ENCODE measurements at regions of chr1 and their contacts with region 1.

Region 1: GRCh38 chr1:202122639-202123335 is at the start of gene GPR37L1:
- DNase-seq: no peak
- CTCF ChIP-seq: no peak

Region 2: DNA sequence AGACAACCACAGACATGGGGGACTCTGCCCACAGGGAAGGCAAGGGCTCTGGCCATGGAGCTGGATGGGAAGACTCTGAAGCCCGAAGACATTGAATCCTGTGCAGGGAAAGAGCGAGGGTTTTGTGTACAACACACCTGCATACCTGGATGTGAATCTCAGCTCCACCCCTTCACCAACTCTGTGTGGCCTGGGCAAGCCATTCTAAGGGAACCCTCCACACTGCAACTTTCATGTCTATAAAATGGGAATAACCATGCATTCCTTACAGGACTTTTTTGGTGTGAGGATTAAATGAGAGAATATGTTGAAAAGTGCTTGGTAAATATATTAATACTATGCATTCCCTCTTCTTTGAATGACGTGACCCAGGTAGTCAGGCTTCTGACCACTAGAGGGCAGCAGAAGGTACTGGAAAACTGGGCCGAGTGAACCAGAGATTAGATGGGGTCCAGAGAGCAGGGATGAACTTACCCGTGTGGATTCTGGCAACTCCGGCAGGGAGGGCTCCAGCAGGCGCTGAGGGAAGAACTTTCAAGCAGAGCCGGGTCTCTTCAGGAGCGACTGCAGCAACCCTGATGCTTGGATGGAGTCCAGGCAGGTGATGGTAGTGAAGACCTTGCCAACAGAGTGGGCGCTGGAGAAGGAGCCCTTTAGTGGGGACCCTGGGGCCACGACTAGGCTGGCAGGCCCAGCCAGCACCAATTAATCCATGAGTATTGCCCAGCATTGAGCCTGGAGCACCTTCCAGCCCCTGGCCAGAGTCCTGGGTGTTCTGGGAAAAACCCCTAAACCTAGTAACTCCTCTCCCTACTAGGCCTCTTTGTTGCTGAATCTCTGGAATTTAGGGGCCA is 113.2 kb before region 1 on chr1:
- CTCF ChIA-PET with region 1: interaction called, 78 read pairs
- POLR2A ChIA-PET with region 1: no interaction called
- DNase-seq: peak; percentile 80
- CTCF ChIP-seq: peak; percentile 91

Region 3: GRCh38 chr1:202076050-202076511 is 46.7 kb before region 1 on chr1:
- CTCF ChIA-PET with region 1: no interaction called
- POLR2A ChIA-PET with region 1: no interaction called
- DNase-seq: no peak
- CTCF ChIP-seq: no peak

Region 4: GRCh38 chr1:202149566-202149965 is 26.8 kb after region 1 on chr1:
- CTCF ChIA-PET with region 1: no interaction called
- POLR2A ChIA-PET with region 1: no interaction called
- DNase-seq: no peak
- CTCF ChIP-seq: no peak